Prostate gland (tissue), 2 donors: ENCODE measurements at regions of chr17 and their contacts with region 1.

Region 1: DNA sequence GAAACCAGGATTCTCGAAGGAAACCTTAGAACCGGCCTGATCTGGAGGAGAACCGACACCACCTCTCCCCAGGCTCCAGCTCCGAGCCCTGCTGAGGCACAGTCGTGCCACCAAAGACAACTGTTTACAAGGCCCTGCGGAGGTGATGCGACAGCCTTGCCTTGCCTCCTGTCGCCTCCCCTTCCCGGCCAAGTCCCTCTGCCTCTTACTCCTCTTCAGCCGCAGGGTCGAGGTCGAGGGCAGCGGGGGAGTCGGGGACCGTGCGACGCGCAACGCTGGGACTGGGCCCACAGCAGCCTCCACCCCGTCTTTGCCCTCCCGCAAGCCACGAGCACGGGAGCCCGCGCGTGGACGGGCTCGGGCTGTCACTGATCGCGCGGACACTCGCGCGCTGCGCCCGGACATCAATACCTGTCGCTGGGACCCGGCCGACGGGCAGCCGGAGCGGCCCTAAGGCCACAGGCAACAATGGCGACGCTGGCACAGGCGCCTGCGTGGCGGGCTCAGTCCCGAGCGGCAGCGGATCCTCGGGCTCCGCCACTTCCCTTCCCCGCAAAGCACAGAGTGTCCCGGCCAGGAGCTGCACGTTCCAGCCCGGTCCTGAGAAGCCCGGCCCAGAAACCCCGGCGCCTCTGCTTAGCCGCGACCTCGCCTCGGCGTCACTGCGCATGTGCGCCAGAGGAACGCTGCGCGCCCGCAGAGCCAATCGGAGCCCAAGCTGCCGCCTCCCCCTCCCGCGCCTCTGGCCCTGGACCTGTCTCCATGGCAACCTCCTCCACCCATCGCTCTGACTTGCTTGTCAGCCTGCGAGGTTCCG is at the start of gene ZNF287:
- DNase-seq: peak; percentile 94
- H3K4me3 ChIP-seq: peak within 1 kb of the TSS; percentile 58 to 75
- H3K27ac ChIP-seq: peak within 1 kb of the TSS; percentile 65 to 66
- H3K4me1 ChIP-seq: no peaks in the 10 kb centered on the region
- H3K27me3 ChIP-seq: no peaks in the 10 kb centered on the region
- CTCF ChIP-seq: no peak
- POLR2A ChIP-seq: peak; percentile 23
- total RNA-seq, gene ZNF287: 11.8 to 14.2 TPM

Region 2: DNA sequence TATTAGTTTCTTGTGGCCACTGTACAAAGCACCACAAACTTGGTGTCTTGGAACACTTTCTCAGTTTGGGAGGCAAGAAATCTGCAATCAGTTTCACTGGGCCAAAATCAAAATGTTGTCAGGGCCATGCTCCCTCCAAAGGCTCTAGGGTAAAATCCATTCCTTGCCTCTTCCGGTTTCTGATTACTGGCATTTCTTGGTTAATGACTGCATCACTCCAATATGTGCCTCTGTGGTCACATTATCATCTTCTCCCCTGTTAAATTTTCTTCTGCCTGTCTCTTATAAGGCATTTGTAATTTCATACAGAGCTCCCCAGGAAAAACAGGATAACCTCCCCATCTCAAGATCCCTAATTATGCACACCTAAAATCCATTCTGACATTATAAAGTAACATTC is 34.5 kb before region 1 on chr17:
- intact Hi-C with region 1: loop called (anchors 2 kb)
- DNase-seq: no peak
- H3K4me3 ChIP-seq: no peak overlapping the region
- H3K27ac ChIP-seq: no peak overlapping the region
- H3K4me1 ChIP-seq: no peaks in the 10 kb centered on the region
- H3K27me3 ChIP-seq: no peaks in the 10 kb centered on the region
- CTCF ChIP-seq: no peak
- POLR2A ChIP-seq: no peak

Region 3: DNA sequence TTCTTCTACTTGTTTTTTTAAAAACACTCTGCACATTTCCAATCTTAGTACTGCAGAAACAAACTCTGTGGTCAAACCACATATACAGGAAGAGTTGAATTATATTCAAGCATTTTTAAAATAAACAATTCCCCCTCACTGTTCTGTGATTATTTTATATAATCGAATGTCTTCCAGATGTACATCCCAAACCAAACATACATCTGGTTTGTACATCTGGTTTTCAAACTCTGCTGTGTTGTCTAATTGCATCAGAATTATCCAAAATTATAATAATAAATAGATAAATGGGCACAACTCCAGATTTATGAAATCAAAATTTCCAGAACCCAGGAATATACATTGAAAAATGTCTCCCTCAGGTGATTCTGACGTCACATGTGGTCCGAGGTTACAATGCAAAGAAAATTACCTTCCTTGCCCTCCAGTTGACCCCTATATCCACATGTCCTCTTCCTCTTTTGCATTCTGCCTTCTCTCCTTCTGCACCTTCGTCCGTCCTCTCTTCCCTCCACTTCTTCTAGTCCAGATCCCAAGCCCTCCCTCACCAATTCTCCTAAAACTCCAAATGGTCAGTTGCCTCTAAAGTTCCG is 108.0 kb after region 1 on chr17:
- intact Hi-C with region 1: no loop called
- DNase-seq: no peak
- H3K4me3 ChIP-seq: no peak overlapping the region
- H3K27ac ChIP-seq: no peak overlapping the region
- H3K4me1 ChIP-seq: no peaks in the 10 kb centered on the region
- H3K27me3 ChIP-seq: no peaks in the 10 kb centered on the region
- CTCF ChIP-seq: no peak
- POLR2A ChIP-seq: no peak